ENCODE measurements at regions of chr20 and their contacts with region 1.

Region 1: GRCh38 chr20:10673988-10674711 is at the start of gene JAG1:
- DNase-seq: peak; percentile 97
- ATAC-seq: peak; percentile 77
- H3K4me3 ChIP-seq: peak within 1 kb of the TSS; percentile 85 to 94 (median 91)
- H3K27ac ChIP-seq: peak within 1 kb of the TSS; percentile 89
- H3K4me1 ChIP-seq: peaks cover 37% of the 10 kb centered on the region
- H3K27me3 ChIP-seq: no peaks in the 10 kb centered on the region; a peak in 1 of 5 replicates
- CTCF ChIP-seq: peak; percentile 22; the same call in 1 of the 2 replicates
- EP300 ChIP-seq: peak in 1 of 2 experiments; percentile 46; a peak in 1 of 4 replicates
- POLR2A ChIP-seq: peak; percentile 82 to 85
- RAD21 ChIP-seq: peak; percentile 66
- total RNA-seq, gene JAG1: 18.1 and 56.3 TPM in 2 replicates

Region 2: DNA sequence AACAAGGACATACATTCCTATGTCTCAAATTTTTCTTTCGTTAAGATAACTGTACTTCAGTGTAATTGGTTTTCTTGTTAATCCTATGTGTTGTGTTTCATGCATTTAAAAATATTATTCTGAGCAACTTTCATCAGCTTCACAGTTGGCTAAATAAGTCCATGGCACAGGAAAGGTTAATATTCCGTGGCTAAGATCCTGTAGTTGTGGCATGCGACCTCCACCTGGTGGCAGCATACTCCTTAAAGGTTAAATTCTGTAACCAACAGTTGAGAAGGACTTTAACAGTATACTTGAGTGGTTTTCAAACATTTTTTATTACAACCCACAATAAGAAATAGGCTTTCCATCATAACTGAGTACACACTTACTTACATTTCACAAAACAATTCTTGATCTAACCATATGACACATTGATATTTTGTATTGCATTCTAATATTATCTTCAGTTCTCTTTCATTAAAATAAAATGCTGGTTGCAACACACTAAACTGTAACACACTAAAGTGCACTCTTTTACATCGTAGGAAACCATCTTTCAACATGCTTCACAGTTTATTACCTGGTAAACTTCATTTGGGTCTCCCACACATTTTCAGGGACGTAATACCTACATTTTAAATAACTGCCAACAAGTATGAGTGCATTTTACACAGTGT is 120.7 kb before region 1 on chr20:
- CTCF ChIA-PET with region 1: interaction called, 3 read pairs
- POLR2A ChIA-PET with region 1: interaction called, 12 read pairs
- in situ Hi-C with region 1: no loop called
- intact Hi-C with region 1: loop called (anchors 1 kb)
- DNase-seq: peak; percentile 84
- ATAC-seq: peak; percentile 70
- H3K4me3 ChIP-seq: no peak overlapping the region
- H3K27ac ChIP-seq: peak overlapping the region; percentile 7
- H3K4me1 ChIP-seq: peaks cover 79% of the 10 kb centered on the region
- H3K27me3 ChIP-seq: no peaks in the 10 kb centered on the region
- CTCF ChIP-seq: peak; percentile 96
- EP300 ChIP-seq: no peak
- POLR2A ChIP-seq: no peak
- RAD21 ChIP-seq: peak; percentile 97

Region 3: GRCh38 chr20:10653599-10654249 is 20.4 kb before region 1 on chr20:
- CTCF ChIA-PET with region 1: no interaction called
- POLR2A ChIA-PET with region 1: interaction called, 39 read pairs
- in situ Hi-C with region 1: no loop called
- intact Hi-C with region 1: loop called (anchors 2 kb)
- DNase-seq: no peak
- ATAC-seq: no peak
- H3K4me3 ChIP-seq: no peak overlapping the region
- H3K27ac ChIP-seq: peak overlapping the region; percentile 69
- H3K4me1 ChIP-seq: peaks cover 40% of the 10 kb centered on the region
- H3K27me3 ChIP-seq: no peaks in the 10 kb centered on the region
- CTCF ChIP-seq: no peak
- EP300 ChIP-seq: no peak
- POLR2A ChIP-seq: no peak
- RAD21 ChIP-seq: no peak

Region 4: GRCh38 chr20:10708351-10709185 is 34.4 kb after region 1 on chr20:
- CTCF ChIA-PET with region 1: no interaction called
- POLR2A ChIA-PET with region 1: interaction called, 104 read pairs
- in situ Hi-C with region 1: no loop called
- intact Hi-C with region 1: loop called (anchors 1 kb)
- DNase-seq: peak; percentile 99
- ATAC-seq: peak; percentile 88
- H3K4me3 ChIP-seq: peak overlapping the region in 1 of 3 experiments; percentile 32; a peak in 1 of 6 replicates
- H3K27ac ChIP-seq: peak overlapping the region; percentile 93
- H3K4me1 ChIP-seq: peaks cover 88% of the 10 kb centered on the region
- H3K27me3 ChIP-seq: no peaks in the 10 kb centered on the region
- CTCF ChIP-seq: 0 out of 2 replicates have a peak, but pooled peaks have one; percentile 4
- EP300 ChIP-seq: peak; percentile 98 to 99
- POLR2A ChIP-seq: no peak
- RAD21 ChIP-seq: peak; percentile 57; the same call in 1 of the 2 replicates

Region 5: DNA sequence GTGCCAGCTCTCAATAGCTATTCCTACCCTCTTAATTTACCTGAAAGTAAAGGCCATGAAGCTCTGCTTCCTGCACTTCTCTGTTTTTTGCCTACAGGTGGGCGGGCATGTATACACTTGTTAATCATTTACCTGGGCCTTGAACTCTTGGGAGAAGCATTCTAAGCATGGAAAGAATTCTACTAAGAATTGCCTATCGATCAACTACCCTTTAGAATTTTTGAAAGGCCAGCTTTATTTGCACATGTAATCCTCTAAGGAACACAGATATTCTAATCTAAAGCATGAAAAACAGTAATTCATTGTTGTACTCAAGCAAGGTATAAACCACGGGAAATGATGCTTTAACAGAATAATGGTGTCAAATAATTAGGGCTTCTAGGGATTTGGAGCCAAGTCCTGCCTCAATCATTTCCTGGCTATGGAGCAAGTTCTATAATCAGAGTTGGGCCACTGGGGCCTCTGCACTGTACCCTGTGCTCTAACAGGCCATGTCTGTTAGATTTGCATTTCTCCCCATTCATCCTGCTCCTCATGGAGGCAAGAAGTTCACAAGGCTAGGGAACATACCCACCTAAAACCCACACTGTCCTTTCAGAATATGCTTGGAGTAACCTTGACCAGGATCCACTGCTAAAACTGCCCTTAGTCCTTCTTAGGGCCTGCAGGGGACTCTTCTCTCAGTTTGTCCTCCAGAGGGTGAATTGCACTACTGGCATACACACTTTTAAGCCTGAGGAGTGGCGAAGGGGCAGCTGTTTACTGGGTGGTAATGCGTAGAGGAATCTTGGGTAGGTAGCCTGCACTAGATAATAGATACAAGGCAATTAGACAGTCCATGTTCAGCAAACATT is 276.0 kb after region 1 on chr20:
- CTCF ChIA-PET with region 1: no interaction called
- POLR2A ChIA-PET with region 1: interaction called, 8 read pairs
- in situ Hi-C with region 1: no loop called
- intact Hi-C with region 1: loop called (anchors 2 kb)
- DNase-seq: peak; percentile 89
- ATAC-seq: peak; percentile 96
- H3K4me3 ChIP-seq: peak overlapping the region in 1 of 3 experiments; percentile 1; a peak in 1 of 6 replicates
- H3K27ac ChIP-seq: peak overlapping the region; percentile 57
- H3K4me1 ChIP-seq: peaks cover 30% of the 10 kb centered on the region
- H3K27me3 ChIP-seq: no peaks in the 10 kb centered on the region
- CTCF ChIP-seq: peak; percentile 15; the same call in 1 of the 2 replicates
- EP300 ChIP-seq: peak in 1 of 2 experiments; percentile 87; a peak in 2 of 4 replicates
- POLR2A ChIP-seq: no peak
- RAD21 ChIP-seq: no peak

Region 6: DNA sequence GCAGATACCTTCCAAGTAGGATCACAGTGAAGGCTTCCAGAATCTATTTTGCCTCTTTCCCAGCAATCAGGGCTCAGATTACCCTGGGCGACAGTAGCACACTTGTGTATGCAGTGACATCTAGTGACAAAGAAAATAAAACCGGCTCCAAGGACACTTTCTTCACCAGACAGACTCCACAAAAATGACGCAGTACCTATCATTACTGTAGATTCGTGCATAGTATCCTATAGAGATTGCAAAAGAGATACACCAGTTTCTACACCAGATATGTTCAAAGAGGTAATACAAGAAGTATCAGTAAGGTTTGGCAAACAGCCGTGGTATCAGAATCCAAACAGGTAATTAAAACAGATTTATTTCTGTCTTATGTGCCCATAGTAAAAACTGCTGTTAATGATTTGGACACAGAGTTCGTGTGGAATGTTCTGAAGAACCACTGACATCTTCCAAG is 600.0 kb after region 1 on chr20:
- CTCF ChIA-PET with region 1: no interaction called
- POLR2A ChIA-PET with region 1: no interaction called
- in situ Hi-C with region 1: loop called (anchors 5 kb)
- intact Hi-C with region 1: loop called (anchors 1 kb)
- DNase-seq: peak; percentile 75
- ATAC-seq: peak; percentile 91
- H3K4me3 ChIP-seq: no peak overlapping the region
- H3K27ac ChIP-seq: no peak overlapping the region
- H3K4me1 ChIP-seq: no peaks in the 10 kb centered on the region
- H3K27me3 ChIP-seq: peaks cover 0 to 8% of the 10 kb centered on the region in 2 experiments; a peak in 1 of 5 replicates
- CTCF ChIP-seq: peak; percentile 91
- EP300 ChIP-seq: no peak
- POLR2A ChIP-seq: no peak
- RAD21 ChIP-seq: peak; percentile 83

Measured in HepG2 (cell line).